CD4-positive, alpha-beta memory T cell (primary cell): ENCODE measurements at regions of chr15 and their contacts with region 1.

Region 1: GRCh38 chr15:43185157-43186017 is at the start of gene CCNDBP1:
- DNase-seq: peak; percentile 81 to 90 (median 86)
- H3K4me3 ChIP-seq: peak within 1 kb of the TSS; percentile 85 to 92
- H3K4me3 Mint-ChIP-seq: peak within 1 kb of the TSS; percentile 94 to 99 (median 96)
- H3K27ac ChIP-seq: peak within 1 kb of the TSS; percentile 73
- H3K27ac Mint-ChIP-seq: peak within 1 kb of the TSS; percentile 92 to 98 (median 96)
- H3K4me1 ChIP-seq: peaks cover 33% of the 10 kb centered on the region
- H3K4me1 Mint-ChIP-seq: peaks cover 21 to 54% (median 35%) of the 10 kb centered on the region in 4 donors
- H3K27me3 ChIP-seq: no peaks in the 10 kb centered on the region
- H3K27me3 Mint-ChIP-seq: no peaks in the 10 kb centered on the region
- total RNA-seq, gene CCNDBP1: 127 to 128 TPM

Region 2: GRCh38 chr15:42736793-42737528 is 448.4 kb before region 1 on chr15 and contains the start of gene CDAN1:
- CTCF ChIA-PET with region 1: no interaction called
- POLR2A ChIA-PET with region 1: no interaction called
- intact Hi-C with region 1: loop called (anchors 10 kb)
- DNase-seq: peak; percentile 87 to 91 (median 89)
- H3K4me3 ChIP-seq: peak within 1 kb of the TSS; percentile 60 to 80
- H3K4me3 Mint-ChIP-seq: peak within 1 kb of the TSS; percentile 82 to 87 (median 84)
- H3K27ac ChIP-seq: peak within 1 kb of the TSS; percentile 82
- H3K27ac Mint-ChIP-seq: peak within 1 kb of the TSS; percentile 79 to 92 (median 87)
- H3K4me1 ChIP-seq: peaks cover 21% of the 10 kb centered on the region
- H3K4me1 Mint-ChIP-seq: peaks cover 6 to 29% (median 10%) of the 10 kb centered on the region in 4 donors
- H3K27me3 ChIP-seq: no peaks in the 10 kb centered on the region
- H3K27me3 Mint-ChIP-seq: no peaks in the 10 kb centered on the region
- total RNA-seq, gene CDAN1: 35.1 to 36.5 TPM

Region 3: GRCh38 chr15:43133430-43134156 is 51.8 kb before region 1 on chr15 and contains the start of gene TMEM62:
- CTCF ChIA-PET with region 1: no interaction called
- POLR2A ChIA-PET with region 1: interaction called, 7 read pairs
- intact Hi-C with region 1: loop called (anchors 5 kb)
- DNase-seq: peak; percentile 47 to 66 (median 56)
- H3K4me3 ChIP-seq: peak within 1 kb of the TSS; percentile 81 to 88
- H3K4me3 Mint-ChIP-seq: peak within 1 kb of the TSS; percentile 90 to 98 (median 95)
- H3K27ac ChIP-seq: peak within 1 kb of the TSS; percentile 72
- H3K27ac Mint-ChIP-seq: peak within 1 kb of the TSS; percentile 83 to 97 (median 94)
- H3K4me1 ChIP-seq: peaks cover 18% of the 10 kb centered on the region
- H3K4me1 Mint-ChIP-seq: peaks cover 11 to 30% (median 22%) of the 10 kb centered on the region in 4 donors
- H3K27me3 ChIP-seq: no peaks in the 10 kb centered on the region
- H3K27me3 Mint-ChIP-seq: peaks cover 2% of the 10 kb centered on the region in 2 donors
- total RNA-seq, gene TMEM62: 14.3 to 17.4 TPM

Region 4: GRCh38 chr15:43285609-43286037 is 100.2 kb after region 1 on chr15:
- CTCF ChIA-PET with region 1: interaction called, 5 read pairs
- POLR2A ChIA-PET with region 1: no interaction called
- intact Hi-C with region 1: loop called (anchors 1 kb)
- DNase-seq: peak; percentile 51 to 64 (median 62)
- H3K4me3 ChIP-seq: no peak overlapping the region
- H3K4me3 Mint-ChIP-seq: no peak overlapping the region
- H3K27ac ChIP-seq: no peak overlapping the region
- H3K27ac Mint-ChIP-seq: no peak overlapping the region
- H3K4me1 ChIP-seq: no peaks in the 10 kb centered on the region
- H3K4me1 Mint-ChIP-seq: peaks cover 0 to 6% (median 4%) of the 10 kb centered on the region in 4 donors
- H3K27me3 ChIP-seq: no peaks in the 10 kb centered on the region
- H3K27me3 Mint-ChIP-seq: peaks cover 4 to 14% of the 10 kb centered on the region in 2 donors

Region 5: DNA sequence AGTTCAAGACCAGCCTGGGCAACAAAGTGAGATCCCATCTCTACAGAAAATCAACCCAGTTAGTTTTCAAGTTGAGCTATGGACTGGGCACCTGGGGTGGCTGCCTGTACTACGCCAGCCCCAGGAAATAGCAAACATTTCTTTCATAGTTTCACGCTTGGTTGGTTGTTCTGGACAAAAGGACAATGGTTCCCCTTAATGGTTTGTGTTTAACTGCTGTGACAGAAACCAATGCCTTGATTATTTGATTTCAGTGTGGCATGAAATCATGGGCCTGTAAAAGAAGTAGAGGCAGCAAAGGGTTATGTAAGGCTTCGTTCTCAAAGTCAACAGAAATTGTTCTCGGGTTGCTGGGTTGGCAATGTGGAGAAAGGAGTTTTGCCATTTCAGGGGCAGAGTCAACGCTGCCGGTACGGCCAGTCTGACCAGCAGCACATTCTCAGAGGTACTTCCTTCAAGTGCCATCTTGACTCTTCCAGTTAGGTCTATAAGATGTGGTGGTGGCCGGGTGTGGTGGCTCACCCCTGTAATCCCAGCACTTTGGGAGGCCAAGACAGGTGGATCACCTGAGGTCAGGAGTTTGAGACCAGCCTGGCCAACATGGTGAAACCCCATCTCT is 132.3 kb after region 1 on chr15:
- CTCF ChIA-PET with region 1: no interaction called
- POLR2A ChIA-PET with region 1: no interaction called
- intact Hi-C with region 1: no loop called
- DNase-seq: no peak
- H3K4me3 ChIP-seq: no peak overlapping the region
- H3K4me3 Mint-ChIP-seq: no peak overlapping the region
- H3K27ac ChIP-seq: no peak overlapping the region
- H3K27ac Mint-ChIP-seq: no peak overlapping the region
- H3K4me1 ChIP-seq: no peaks in the 10 kb centered on the region
- H3K4me1 Mint-ChIP-seq: no peaks in the 10 kb centered on the region
- H3K27me3 ChIP-seq: no peaks in the 10 kb centered on the region
- H3K27me3 Mint-ChIP-seq: peaks cover 20 to 24% of the 10 kb centered on the region in 2 donors

Region 6: DNA sequence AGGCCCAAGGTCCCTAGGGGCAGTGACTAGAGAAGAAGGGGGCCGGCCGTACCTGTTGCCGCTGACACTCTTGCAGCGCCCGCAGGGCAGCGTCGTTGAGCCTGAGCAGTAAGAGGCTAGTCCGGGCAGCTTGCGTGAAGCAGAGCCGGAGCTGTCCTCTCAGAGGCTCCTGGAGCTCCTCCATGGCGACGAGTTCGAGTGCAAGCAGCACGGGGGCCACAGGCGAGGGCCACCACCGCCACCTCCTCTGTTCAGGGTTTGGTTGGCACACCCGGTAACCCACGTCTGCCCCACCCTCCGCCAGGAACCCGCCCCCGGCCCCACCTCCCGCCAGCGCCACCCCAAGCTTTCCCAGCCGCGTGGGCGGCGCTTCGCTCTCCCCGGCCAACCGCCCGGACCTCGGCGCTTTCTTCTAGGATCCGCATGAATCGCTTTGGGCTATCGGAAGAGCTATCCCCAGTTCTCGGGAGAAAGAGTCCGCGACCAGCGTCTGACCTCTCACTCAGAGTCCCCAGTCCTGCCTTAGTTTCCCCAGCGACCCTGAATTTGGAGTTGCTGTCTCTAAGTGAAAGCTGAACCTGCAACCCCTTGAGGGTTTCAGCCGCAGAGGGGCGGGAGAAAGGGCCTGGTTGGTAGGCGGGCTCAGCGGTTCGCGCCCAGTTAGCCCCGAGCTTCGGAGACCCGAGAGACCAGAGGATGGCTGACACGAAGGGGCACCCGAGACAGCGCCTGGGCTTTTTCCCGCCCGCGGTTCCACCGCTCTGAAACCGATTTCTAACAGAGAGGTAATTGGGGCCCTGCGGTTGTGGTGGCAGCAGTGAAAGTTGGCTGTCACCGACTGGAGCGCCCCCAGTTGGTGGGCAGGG is 591.6 kb after region 1 on chr15 and contains the start of gene ELL3:
- CTCF ChIA-PET with region 1: no interaction called
- POLR2A ChIA-PET with region 1: no interaction called
- intact Hi-C with region 1: no loop called
- DNase-seq: peak; percentile 85 to 91 (median 86)
- H3K4me3 ChIP-seq: peak within 1 kb of the TSS; percentile 82 to 95
- H3K4me3 Mint-ChIP-seq: peak within 1 kb of the TSS; percentile 93 to 96 (median 94)
- H3K27ac ChIP-seq: peak within 1 kb of the TSS; percentile 66
- H3K27ac Mint-ChIP-seq: peak within 1 kb of the TSS; percentile 94 to 97 (median 95)
- H3K4me1 ChIP-seq: peaks cover 16% of the 10 kb centered on the region
- H3K4me1 Mint-ChIP-seq: peaks cover 8 to 18% (median 11%) of the 10 kb centered on the region in 4 donors
- H3K27me3 ChIP-seq: no peaks in the 10 kb centered on the region
- H3K27me3 Mint-ChIP-seq: no peaks in the 10 kb centered on the region
- total RNA-seq, gene ELL3: 1.3 to 1.8 TPM